Sigmoid colon (tissue), 7 donors: ENCODE measurements at regions of chr16 and their contacts with region 1.

Region 1: GRCh38 chr16:69132424-69133252 is at the starts of genes CHTF8 and UTP4:
- DNase-seq: peak; percentile 93
- H3K4me3 ChIP-seq: peak within 1 kb of the TSS; percentile 82 to 98 (median 88)
- H3K27ac ChIP-seq: peak within 1 kb of the TSS; percentile 89 to 96 (median 90)
- H3K4me1 ChIP-seq: peaks cover 0 to 39% (median 24%) of the 10 kb centered on the region in 4 donors
- H3K27me3 ChIP-seq: no peaks in the 10 kb centered on the region
- CTCF ChIP-seq: no peak
- EP300 ChIP-seq: no peak
- POLR2A ChIP-seq: peak; percentile 47 to 61
- total RNA-seq, gene CHTF8: 46.3 to 79.2 (median 55.5) TPM
- total RNA-seq, gene UTP4: 24.6 to 37.5 (median 27.8) TPM

Region 2: GRCh38 chr16:68848786-68849185 is 283.9 kb before region 1 on chr16:
- intact Hi-C with region 1: loop called (anchors 5 kb)
- DNase-seq: no peak
- H3K4me3 ChIP-seq: no peak overlapping the region
- H3K27ac ChIP-seq: no peak overlapping the region
- H3K4me1 ChIP-seq: peaks cover 0 to 14% (median 10%) of the 10 kb centered on the region in 4 donors
- H3K27me3 ChIP-seq: no peaks in the 10 kb centered on the region
- CTCF ChIP-seq: no peak
- EP300 ChIP-seq: no peak
- POLR2A ChIP-seq: no peak

Region 3: DNA sequence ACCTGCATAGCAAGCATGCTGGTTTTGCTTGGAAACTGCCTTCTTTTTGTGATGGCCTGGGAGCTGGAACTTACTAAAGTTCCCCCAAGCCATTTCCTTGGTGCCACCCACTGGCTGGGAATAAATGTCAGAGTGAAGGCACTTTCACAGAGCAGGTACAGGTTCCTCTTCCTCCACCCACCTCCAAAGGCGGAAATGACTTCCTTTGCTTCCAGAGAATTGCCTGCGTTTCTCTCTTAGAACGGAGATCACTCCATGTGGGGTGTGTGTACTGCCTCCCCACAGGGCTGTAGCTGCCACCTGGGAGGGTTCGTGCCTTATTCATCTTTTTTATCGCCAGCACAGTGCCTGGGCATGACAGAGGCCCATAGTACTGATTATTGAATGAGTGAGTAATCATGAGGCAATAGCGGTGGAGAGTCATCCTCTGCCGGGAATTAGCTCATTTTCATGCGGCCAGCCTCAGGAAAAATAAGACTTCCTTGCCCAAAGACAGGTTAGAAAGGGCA is 59.4 kb before region 1 on chr16:
- intact Hi-C with region 1: no loop called
- DNase-seq: no peak
- H3K4me3 ChIP-seq: no peak overlapping the region
- H3K27ac ChIP-seq: no peak overlapping the region
- H3K4me1 ChIP-seq: no peaks in the 10 kb centered on the region
- H3K27me3 ChIP-seq: no peaks in the 10 kb centered on the region
- CTCF ChIP-seq: no peak
- EP300 ChIP-seq: no peak
- POLR2A ChIP-seq: no peak